GM18951 (cell line): ENCODE measurements at regions of chr2 and their contacts with region 1.

Region 1: DNA sequence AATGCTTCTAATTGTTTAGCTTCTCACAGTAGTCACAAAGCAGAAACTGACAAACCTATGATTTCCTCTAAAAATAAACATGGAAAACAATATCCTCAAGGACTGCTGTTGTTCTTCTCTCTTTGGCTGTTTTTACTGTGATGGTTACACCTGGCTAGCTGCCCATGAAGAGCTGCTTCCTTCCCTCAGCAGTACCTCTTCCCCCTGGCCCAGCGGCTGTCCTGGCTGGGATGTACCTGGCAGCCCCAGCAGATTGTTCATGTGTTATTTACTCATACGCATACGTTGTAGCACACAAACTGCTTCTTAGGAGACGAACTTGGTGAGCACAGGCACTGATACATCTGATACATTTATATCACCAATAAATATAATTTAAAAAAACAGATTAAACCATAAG is 27.4 kb downstream of the NEMP2 start:
- POLR2A ChIP-seq: no peak

Region 2: DNA sequence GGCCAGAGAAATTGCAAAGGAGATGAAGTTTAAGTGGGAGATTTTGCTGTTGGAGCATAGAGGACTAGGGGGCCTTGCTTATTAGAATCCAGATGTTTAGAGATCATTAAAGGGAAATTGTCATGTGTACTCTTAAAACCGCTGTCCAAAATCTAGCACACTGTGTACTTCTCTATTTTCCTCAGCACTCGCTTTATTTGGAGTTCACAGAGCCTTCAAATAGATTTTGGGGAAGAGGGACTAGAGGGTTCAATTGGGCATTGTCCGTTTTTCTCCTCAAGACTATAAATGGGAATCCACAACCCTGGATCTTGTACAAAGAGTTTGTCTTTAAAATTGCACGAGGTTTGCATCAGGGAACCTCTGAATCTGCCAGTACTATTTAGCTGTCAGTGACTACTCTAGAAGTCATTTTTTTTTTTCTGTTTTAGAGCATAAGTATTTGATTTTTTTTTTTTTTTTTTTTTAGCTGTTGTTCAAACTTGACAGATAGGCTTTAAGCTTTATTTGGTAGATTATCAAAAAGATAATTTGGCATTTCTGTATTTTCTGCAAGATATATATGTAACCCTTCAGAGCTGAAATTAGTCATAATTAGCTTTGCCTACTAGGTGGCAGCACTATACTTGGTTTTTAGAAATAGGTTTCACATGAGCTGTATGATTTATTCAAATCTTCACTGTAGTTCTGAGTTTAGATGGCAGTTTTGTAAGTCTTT is 708.7 kb before region 1 on chr2:
- in situ Hi-C with region 1: no loop called
- POLR2A ChIP-seq: no peak

Region 3: DNA sequence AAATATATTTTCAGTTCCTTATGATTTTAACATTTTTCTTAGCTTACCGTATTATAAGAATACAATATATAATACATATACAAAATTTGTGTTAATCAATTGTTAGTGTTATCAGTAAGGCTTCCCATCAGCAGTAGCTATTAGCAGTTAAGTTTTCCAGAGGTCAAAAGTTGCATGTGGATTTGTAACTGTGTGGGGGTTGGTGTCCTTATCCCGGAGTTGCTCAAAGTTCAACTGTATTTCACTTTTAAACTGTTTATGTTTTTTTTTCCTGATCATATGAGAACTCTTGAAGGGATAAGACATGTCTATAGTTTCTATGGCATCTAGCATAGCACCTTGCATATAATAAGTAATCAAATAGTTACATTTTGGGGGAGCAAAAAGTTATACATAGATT is 110.9 kb before region 1 on chr2:
- in situ Hi-C with region 1: loop called (anchors 10 kb)
- POLR2A ChIP-seq: no peak